ENCODE measurements at regions of chr11 and their contacts with region 1.

Region 1: DNA sequence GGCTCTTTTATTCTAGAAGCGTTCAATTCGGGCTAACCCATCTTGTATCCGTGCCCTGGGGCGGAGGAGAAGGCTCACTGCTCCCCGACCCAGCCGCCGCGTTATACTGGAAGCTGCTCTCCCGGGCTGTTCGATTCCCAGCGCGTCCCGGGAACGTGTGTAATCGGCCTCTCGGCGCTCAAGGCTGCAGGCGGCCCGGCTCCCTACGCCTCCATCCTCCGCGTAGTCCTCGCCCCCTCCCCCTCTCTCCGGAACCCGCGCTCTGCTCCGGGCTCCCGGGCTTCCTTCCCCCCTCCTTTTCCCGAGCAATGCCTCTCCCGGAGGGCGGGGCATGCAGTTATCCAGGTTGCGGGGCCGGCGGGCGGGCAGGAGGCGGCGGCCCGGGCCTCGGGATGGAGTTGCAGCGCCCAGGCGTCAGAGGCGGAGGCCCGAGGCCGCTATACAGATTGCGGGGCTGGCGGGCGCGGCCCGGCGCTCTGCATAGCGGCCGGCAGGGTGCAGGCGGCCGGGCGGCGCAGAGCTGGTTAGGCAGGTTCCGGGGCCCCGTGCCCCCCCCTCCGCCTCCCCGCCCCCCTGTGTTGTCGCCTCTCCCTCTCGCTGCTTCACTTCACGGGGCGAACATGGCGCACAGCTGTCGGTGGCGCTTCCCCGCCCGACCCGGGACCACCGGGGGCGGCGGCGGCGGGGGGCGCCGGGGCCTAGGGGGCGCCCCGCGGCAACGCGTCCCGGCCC is at the start of gene KMT2A:
- DNase-seq: peak; percentile 95
- H3K4me3 Mint-ChIP-seq: peak within 1 kb of the TSS; percentile 90
- H3K27ac Mint-ChIP-seq: peak within 1 kb of the TSS; percentile 98
- H3K4me1 Mint-ChIP-seq: peaks cover 28% of the 10 kb centered on the region
- H3K27me3 Mint-ChIP-seq: no peaks in the 10 kb centered on the region
- total RNA-seq, gene KMT2A: 68.4 to 68.5 TPM

Region 2: GRCh38 chr11:118227865-118228785 is 207.9 kb before region 1 on chr11:
- CTCF ChIA-PET with region 1: no interaction called
- intact Hi-C with region 1: no loop called
- DNase-seq: peak; percentile 30
- H3K4me3 Mint-ChIP-seq: peak overlapping the region; percentile 3
- H3K27ac Mint-ChIP-seq: peak overlapping the region; percentile 89
- H3K4me1 Mint-ChIP-seq: peaks cover 20% of the 10 kb centered on the region
- H3K27me3 Mint-ChIP-seq: no peaks in the 10 kb centered on the region

Region 3: DNA sequence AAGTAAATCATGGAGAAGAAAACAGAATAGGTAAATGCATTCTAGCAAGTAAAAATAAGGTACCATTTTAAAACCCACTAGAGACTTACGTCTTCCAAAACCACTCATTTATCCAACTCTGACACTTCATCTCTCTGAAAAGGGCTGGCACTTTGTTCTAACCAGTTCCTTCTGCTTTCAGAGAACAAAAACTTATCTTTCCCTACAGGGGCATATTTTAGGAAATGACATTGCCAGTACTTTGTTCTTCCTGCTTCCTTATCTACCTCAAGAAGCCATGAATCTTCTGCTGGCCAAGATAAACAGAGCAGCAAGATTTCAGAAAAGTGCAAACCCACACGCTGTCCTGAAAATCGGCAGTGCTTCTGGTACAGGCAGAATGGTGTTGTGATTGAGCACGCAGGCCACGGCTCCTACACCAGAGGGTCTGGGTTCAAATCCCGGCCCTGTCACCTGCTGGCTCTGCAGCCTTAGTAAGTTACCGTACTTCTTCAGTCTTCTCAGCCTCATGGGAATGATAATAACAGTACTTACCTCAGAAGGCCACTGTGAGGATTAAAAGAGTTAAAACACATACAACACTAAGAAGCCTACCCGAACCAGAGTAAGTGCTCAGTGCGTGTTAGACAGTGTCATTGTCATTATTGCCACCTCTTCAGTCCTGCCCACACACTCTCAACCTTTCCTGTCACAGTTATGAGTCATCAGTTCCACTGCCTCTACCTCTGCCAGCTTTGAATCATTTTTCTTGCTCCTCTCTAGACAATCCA is 194.9 kb before region 1 on chr11:
- CTCF ChIA-PET with region 1: no interaction called
- intact Hi-C with region 1: loop called (anchors 5 kb)
- DNase-seq: peak; percentile 87
- H3K4me3 Mint-ChIP-seq: peak overlapping the region; percentile 77
- H3K27ac Mint-ChIP-seq: peak overlapping the region; percentile 99
- H3K4me1 Mint-ChIP-seq: peaks cover 91% of the 10 kb centered on the region
- H3K27me3 Mint-ChIP-seq: no peaks in the 10 kb centered on the region

Region 4: DNA sequence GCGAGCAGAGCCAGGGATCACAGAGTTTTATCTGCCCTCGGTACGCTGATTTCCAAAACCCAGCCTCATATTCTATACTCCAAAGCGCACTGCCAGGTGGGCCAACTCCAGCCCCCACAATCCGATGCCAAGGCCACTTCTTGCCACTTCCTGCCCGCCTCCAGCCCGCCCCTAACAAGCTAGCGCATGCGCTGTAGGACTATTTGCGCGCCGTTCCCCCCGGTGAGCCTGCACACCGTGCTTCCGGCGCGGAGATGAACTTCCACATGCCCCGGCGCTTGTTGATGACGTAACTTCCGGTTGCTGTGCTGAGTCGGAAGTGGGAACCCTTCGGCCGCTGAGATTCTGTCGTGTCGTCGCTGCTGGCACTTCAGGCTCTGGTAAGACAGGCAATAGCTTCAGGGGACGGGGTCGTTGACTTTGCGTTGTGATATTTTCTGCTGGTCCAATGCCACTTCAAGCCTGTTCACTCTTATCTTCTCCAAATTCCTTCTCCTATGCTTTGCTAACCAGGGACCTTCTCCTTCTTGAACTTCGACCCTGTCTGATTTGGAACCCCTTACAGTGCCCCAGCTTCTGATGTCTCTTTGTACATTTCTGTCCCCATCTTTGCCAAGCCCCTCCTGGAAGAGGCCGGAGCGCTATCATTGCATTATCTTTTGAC is 76.6 kb before region 1 on chr11 and contains the start of gene UBE4A:
- CTCF ChIA-PET with region 1: no interaction called
- intact Hi-C with region 1: loop called (anchors 1 kb)
- DNase-seq: peak; percentile 100
- H3K4me3 Mint-ChIP-seq: peak within 1 kb of the TSS; percentile 99
- H3K27ac Mint-ChIP-seq: peak within 1 kb of the TSS; percentile 91
- H3K4me1 Mint-ChIP-seq: peaks cover 52% of the 10 kb centered on the region
- H3K27me3 Mint-ChIP-seq: no peaks in the 10 kb centered on the region
- total RNA-seq, gene UBE4A: 35.3 to 35.7 TPM

Region 5: GRCh38 chr11:118462178-118462577 is 26.1 kb after region 1 on chr11:
- CTCF ChIA-PET with region 1: interaction called, 5 read pairs
- intact Hi-C with region 1: loop called (anchors 2 kb)
- DNase-seq: no peak
- H3K4me3 Mint-ChIP-seq: no peak overlapping the region
- H3K27ac Mint-ChIP-seq: no peak overlapping the region
- H3K4me1 Mint-ChIP-seq: peaks cover 44% of the 10 kb centered on the region
- H3K27me3 Mint-ChIP-seq: no peaks in the 10 kb centered on the region

Region 6: GRCh38 chr11:118572061-118572980 is 136.3 kb after region 1 on chr11 and contains the start of gene ARCN1:
- CTCF ChIA-PET with region 1: no interaction called
- intact Hi-C with region 1: loop called (anchors 1 kb)
- DNase-seq: peak; percentile 84
- H3K4me3 Mint-ChIP-seq: peak within 1 kb of the TSS; percentile 91
- H3K27ac Mint-ChIP-seq: peak within 1 kb of the TSS; percentile 94
- H3K4me1 Mint-ChIP-seq: peaks cover 54% of the 10 kb centered on the region
- H3K27me3 Mint-ChIP-seq: no peaks in the 10 kb centered on the region
- total RNA-seq, gene ARCN1: 159 to 174 TPM

Region 7: DNA sequence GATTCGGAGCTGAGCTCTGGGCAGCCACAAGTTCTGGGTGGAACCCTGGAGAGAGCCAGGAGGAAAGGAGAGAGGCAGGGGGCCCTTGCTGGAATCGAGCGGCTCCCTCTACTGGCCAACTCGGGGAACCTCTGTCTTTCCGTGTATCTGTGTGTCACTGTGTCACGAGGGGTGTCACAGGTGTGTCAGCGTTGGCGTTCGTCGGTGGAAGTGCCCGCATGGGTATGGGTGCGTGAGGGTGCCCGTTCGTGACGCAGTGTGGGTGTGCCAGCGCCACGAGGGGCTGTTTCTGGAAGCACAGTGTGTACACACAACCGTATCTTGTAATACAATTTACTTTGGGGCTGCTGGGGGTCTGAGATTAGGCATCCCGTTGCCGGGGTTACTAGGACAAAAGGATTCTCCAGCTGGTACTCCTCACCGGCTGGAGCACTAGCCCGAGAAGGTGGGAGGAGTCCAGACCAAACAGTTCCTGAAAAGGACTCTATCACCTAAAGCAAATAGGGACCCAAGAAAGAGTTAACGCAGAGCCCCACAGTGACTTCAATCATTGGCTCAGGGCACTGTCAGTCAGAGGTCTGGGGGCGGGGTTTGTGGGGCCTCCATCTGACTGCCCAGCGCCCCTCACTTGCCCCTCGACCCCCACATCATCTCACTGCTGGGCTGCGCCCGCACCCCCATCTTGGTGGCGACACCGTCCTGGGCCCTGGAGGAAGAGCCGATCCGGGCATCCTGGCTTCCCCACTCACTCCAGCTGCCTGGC is 492.2 kb after region 1 on chr11:
- CTCF ChIA-PET with region 1: no interaction called
- intact Hi-C with region 1: loop called (anchors 5 kb)
- DNase-seq: peak; percentile 96
- H3K4me3 Mint-ChIP-seq: peak overlapping the region; percentile 96
- H3K27ac Mint-ChIP-seq: peak overlapping the region; percentile 95
- H3K4me1 Mint-ChIP-seq: peaks cover 37% of the 10 kb centered on the region
- H3K27me3 Mint-ChIP-seq: no peaks in the 10 kb centered on the region